ENCODE measurements at regions of chr9 and their contacts with region 1.

Region 1: DNA sequence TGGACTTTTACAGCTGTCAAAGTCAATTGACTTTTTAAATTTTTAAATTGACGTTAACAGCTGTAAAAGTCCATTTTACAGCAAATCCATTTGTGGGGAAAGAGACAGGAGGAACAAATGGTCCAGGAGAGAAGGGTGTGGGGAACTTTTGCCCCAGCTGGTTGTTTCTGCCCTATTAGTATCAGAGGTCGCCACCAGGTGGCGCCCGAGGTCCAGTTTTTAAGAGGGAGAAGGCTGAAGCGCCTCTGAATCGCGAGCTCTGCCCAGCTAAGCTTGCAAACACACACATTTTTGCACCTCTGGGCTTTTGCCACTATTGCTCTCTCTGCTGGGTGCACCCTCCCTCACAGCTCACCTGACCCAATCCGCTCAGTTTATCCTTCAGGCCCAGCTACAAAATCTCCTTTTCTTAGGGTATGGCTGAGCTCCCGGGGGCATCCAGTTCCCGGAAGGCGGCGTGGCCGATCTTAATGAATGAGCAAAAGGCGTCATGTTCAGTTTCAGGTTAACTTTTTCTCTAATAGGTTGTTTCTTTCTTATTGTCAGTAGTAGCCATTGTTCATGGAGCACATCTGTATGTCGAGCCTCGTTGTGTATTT is 6.3 kb upstream of the TTLL11 start:
- DNase-seq: peak; percentile 47 to 73
- H3K4me3 ChIP-seq: no peak overlapping the region
- H3K27ac ChIP-seq: no peak overlapping the region
- H3K4me1 ChIP-seq: no peaks in the 10 kb centered on the region
- H3K27me3 ChIP-seq: peaks cover 21% of the 10 kb centered on the region; the same call in 1 of the 2 replicates
- CTCF ChIP-seq: peak; percentile 88

Region 2: DNA sequence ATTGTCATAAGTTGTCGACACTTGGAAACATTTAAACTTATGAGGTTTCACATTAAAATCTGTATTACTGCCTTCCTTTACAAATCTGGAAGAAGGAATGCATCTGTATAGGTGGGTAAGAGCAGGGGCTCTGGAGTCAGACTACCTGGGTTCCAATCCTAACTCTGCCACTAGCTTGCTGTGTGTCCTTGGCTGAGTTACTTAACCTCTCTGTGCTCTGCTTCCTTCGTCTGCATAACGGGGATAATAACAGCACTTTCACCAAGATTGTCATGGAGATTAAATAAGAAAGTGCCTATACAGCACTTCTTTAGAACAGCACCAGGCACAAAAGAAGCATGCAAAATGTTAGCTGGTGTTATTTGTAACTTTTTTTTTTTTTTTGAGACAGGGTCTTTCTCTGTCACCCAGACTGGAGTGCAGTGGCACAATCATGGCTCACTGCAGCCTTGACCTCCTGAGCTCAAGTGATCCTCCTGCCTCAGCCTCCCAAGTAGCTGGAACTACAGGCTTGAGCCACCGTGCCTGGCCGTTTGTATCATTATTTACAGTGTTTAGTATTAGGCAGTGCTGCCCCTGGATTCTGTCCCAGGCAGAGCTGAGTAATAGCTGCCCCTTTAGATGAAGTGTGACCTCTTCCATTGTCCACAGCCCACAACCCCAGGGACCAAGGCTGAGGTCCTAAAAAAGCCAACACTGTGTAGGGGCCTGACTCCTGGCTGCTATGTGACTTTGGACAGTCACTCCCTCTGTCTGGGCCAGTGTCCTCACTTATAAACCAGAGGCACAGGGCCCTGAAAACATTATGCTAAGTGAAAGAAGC is 19.2 kb after region 1 on chr9:
- CTCF ChIA-PET with region 1: interaction called, 47 read pairs
- POLR2A ChIA-PET with region 1: no interaction called
- intact Hi-C with region 1: loop called (anchors 1 kb)
- DNase-seq: no peak
- H3K4me3 ChIP-seq: no peak overlapping the region
- H3K27ac ChIP-seq: no peak overlapping the region
- H3K4me1 ChIP-seq: no peaks in the 10 kb centered on the region
- H3K27me3 ChIP-seq: peaks cover 20% of the 10 kb centered on the region
- CTCF ChIP-seq: no peak

Region 3: GRCh38 chr9:122332083-122332482 is 232.7 kb after region 1 on chr9:
- CTCF ChIA-PET with region 1: no interaction called
- POLR2A ChIA-PET with region 1: no interaction called
- intact Hi-C with region 1: no loop called
- DNase-seq: no peak
- H3K4me3 ChIP-seq: no peak overlapping the region
- H3K27ac ChIP-seq: no peak overlapping the region
- H3K4me1 ChIP-seq: no peaks in the 10 kb centered on the region
- H3K27me3 ChIP-seq: no peaks in the 10 kb centered on the region
- CTCF ChIP-seq: no peak

Region 4: GRCh38 chr9:122350638-122351355 is 251.4 kb after region 1 on chr9:
- CTCF ChIA-PET with region 1: interaction called, 10 read pairs
- POLR2A ChIA-PET with region 1: no interaction called
- intact Hi-C with region 1: loop called (anchors 1 kb)
- DNase-seq: peak in 1 of 2 experiments; percentile 82
- H3K4me3 ChIP-seq: no peak overlapping the region
- H3K27ac ChIP-seq: no peak overlapping the region
- H3K4me1 ChIP-seq: no peaks in the 10 kb centered on the region
- H3K27me3 ChIP-seq: peaks cover 21% of the 10 kb centered on the region
- CTCF ChIP-seq: peak; percentile 93

Region 5: GRCh38 chr9:122453677-122454135 is 354.3 kb after region 1 on chr9:
- CTCF ChIA-PET with region 1: interaction called, 8 read pairs
- POLR2A ChIA-PET with region 1: interaction called, 4 read pairs
- intact Hi-C with region 1: loop called (anchors 1 kb)
- DNase-seq: no peak
- H3K4me3 ChIP-seq: no peak overlapping the region
- H3K27ac ChIP-seq: no peak overlapping the region
- H3K4me1 ChIP-seq: no peaks in the 10 kb centered on the region
- H3K27me3 ChIP-seq: peaks cover 6% of the 10 kb centered on the region; the same call in 1 of the 2 replicates
- CTCF ChIP-seq: no peak

Measured in PC-9 (cell line).